Activated CD4-positive, alpha-beta memory T cell treated with anti-CD3 and anti-CD28 coated beads, Interleukin-2, amount 10 ng/mL, durations not matched to agents 7 days and 5 days (primary cell): ENCODE measurements at regions of chr4 and their contacts with region 1.

Region 1: GRCh38 chr4:10006231-10006600 is 15.1 kb downstream of the SLC2A9 start:
- DNase-seq: no peak
- H3K4me3 Mint-ChIP-seq: no peak overlapping the region
- H3K27ac Mint-ChIP-seq: no peak overlapping the region
- H3K4me1 Mint-ChIP-seq: peaks cover 79% of the 10 kb centered on the region
- H3K27me3 Mint-ChIP-seq: no peaks in the 10 kb centered on the region

Region 2: GRCh38 chr4:9970392-9971013 is 35.7 kb before region 1 on chr4:
- CTCF ChIA-PET with region 1: interaction called, 6 read pairs
- POLR2A ChIA-PET with region 1: interaction called, 32 read pairs
- DNase-seq: no peak
- H3K4me3 Mint-ChIP-seq: no peak overlapping the region
- H3K27ac Mint-ChIP-seq: peak overlapping the region; percentile 78
- H3K4me1 Mint-ChIP-seq: peaks cover 38% of the 10 kb centered on the region
- H3K27me3 Mint-ChIP-seq: no peaks in the 10 kb centered on the region

Region 3: DNA sequence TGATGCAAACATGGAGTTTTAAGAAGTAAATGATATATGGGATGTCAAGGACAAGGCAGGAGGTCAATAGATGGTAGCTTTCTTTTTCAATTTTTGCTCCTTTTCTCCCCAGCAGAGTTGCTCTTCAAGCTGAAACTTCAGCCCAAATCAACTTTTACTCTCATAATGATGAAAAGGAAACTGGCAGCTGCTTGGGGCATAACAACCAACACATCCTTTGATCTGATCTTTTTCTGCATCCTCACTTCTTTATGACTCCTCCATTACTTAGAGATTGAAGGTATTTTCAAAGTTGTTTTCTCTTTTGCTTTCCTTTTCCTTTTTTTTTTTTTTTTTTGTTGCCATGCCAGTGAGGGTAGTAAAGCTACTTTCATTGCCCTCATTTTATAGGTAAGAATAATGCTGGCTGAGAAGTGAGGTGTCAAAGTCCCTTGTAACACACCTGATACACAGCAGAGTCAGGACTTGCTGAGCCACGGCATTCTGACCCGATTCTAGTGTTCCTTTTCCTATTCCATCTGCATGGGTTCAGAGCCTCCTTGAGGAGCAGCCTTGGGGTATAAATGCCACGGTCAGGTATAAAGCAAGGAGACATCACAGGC is 11.9 kb before region 1 on chr4:
- CTCF ChIA-PET with region 1: interaction called, 13 read pairs
- POLR2A ChIA-PET with region 1: interaction called, 7 read pairs
- DNase-seq: no peak
- H3K4me3 Mint-ChIP-seq: no peak overlapping the region
- H3K27ac Mint-ChIP-seq: peak overlapping the region; percentile 66
- H3K4me1 Mint-ChIP-seq: peaks cover 55% of the 10 kb centered on the region
- H3K27me3 Mint-ChIP-seq: no peaks in the 10 kb centered on the region